ENCODE measurements at regions of chr14 and their contacts with region 1.

Region 1: GRCh38 chr14:77124345-77125280 is 17.0 kb downstream of the ZDHHC22 start:
- DNase-seq: peak; percentile 53
- H3K4me3 ChIP-seq: peak overlapping the region; percentile 4 to 42 (median 36)
- H3K27ac ChIP-seq: no peak overlapping the region
- H3K4me1 ChIP-seq: peaks cover 6% of the 10 kb centered on the region
- H3K27me3 ChIP-seq: peaks cover 12 to 16% of the 10 kb centered on the region in 2 experiments
- CTCF ChIP-seq: peak; percentile 43 to 81
- POLR2A ChIP-seq: no peak

Region 2: GRCh38 chr14:77097700-77098528 is 26.7 kb before region 1 on chr14 and contains the start of gene CIPC:
- CTCF ChIA-PET with region 1: interaction called, 19 read pairs
- POLR2A ChIA-PET with region 1: interaction called, 4 read pairs
- dilution Hi-C with region 1: no loop called
- intact Hi-C with region 1: loop called (anchors 1 kb)
- DNase-seq: peak; percentile 99
- H3K4me3 ChIP-seq: peak within 1 kb of the TSS; percentile 30 to 72 (median 66)
- H3K27ac ChIP-seq: peak within 1 kb of the TSS; percentile 57
- H3K4me1 ChIP-seq: peaks cover 27% of the 10 kb centered on the region
- H3K27me3 ChIP-seq: no peaks in the 10 kb centered on the region
- CTCF ChIP-seq: no peak
- POLR2A ChIP-seq: no peak
- total RNA-seq, gene CIPC: 17.4 and 17.7 TPM in 2 replicates

Region 3: DNA sequence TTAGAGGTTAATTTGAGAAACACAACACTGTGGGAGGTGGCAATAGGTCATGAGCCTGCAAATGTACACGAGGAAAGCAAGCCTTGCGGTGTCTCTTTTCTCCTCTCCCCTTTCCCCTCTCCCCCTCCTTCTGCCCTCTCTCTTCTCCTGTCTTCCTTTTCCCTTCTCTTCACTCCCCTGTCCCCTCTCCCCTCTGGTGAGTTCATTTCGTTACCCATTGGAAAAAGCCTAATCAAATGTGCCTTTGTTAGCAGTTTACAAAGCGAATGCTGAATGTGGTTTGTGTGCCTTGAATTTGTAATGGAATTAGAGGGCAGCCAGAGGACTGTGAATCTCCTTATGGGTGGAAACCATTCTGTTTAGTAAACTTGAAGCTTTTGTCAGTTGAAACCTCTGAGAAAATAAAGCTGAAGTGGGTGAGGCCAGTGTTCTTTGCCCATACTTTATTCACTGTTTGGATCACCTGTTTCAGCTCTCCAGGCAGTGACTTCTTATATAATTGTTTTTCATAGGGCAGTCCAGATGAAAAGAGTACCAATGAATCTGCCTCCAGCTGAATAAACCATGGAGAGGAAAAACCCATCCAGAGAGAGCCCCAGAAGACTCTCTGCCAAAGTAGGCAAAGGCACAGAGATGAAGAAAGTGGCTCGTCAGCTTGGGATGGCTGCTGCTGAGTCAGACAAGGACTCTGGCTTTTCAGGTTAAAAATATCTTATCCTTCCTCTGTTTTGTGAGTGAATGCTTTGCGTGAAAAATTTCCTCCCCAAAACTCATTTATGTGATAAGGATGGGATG is 19.3 kb before region 1 on chr14:
- CTCF ChIA-PET with region 1: interaction called, 19 read pairs
- POLR2A ChIA-PET with region 1: no interaction called
- dilution Hi-C with region 1: no loop called
- intact Hi-C with region 1: no loop called
- DNase-seq: no peak
- H3K4me3 ChIP-seq: no peak overlapping the region
- H3K27ac ChIP-seq: no peak overlapping the region
- H3K4me1 ChIP-seq: peaks cover 7% of the 10 kb centered on the region
- H3K27me3 ChIP-seq: no peaks in the 10 kb centered on the region
- CTCF ChIP-seq: no peak
- POLR2A ChIP-seq: no peak

Region 4: DNA sequence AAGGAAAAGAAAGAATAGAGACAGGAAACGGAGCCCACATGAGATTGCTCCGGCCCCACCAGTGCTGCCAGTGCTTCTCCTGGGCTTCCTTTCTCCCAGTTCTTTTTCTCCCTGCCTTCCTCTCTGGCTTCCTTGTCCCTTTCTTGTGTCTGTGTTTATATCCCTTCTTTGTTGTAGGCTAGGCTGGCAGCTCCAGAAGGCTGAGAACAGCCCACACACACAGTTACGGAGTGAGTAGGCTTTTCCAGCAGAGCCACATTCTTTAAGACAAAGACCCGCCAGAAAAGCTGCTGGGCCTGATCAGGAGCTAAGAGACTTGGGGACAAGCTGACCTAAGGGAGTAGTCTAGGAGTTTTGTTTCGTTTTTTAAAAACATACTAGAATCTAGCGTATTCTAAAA is 13.6 kb before region 1 on chr14:
- CTCF ChIA-PET with region 1: interaction called, 13 read pairs
- POLR2A ChIA-PET with region 1: no interaction called
- dilution Hi-C with region 1: no loop called
- intact Hi-C with region 1: no loop called
- DNase-seq: peak; percentile 68
- H3K4me3 ChIP-seq: no peak overlapping the region
- H3K27ac ChIP-seq: peak overlapping the region; percentile 67
- H3K4me1 ChIP-seq: peaks cover 14% of the 10 kb centered on the region
- H3K27me3 ChIP-seq: no peaks in the 10 kb centered on the region
- CTCF ChIP-seq: no peak
- POLR2A ChIP-seq: no peak

Region 5: GRCh38 chr14:77151918-77152588 is 27.4 kb after region 1 on chr14:
- CTCF ChIA-PET with region 1: interaction called, 11 read pairs
- POLR2A ChIA-PET with region 1: interaction called, 3 read pairs
- dilution Hi-C with region 1: no loop called
- intact Hi-C with region 1: no loop called
- DNase-seq: peak; percentile 28
- H3K4me3 ChIP-seq: no peak overlapping the region
- H3K27ac ChIP-seq: no peak overlapping the region
- H3K4me1 ChIP-seq: no peaks in the 10 kb centered on the region
- H3K27me3 ChIP-seq: peaks cover 11 to 19% of the 10 kb centered on the region in 2 experiments
- CTCF ChIP-seq: no peak
- POLR2A ChIP-seq: no peak

Region 6: DNA sequence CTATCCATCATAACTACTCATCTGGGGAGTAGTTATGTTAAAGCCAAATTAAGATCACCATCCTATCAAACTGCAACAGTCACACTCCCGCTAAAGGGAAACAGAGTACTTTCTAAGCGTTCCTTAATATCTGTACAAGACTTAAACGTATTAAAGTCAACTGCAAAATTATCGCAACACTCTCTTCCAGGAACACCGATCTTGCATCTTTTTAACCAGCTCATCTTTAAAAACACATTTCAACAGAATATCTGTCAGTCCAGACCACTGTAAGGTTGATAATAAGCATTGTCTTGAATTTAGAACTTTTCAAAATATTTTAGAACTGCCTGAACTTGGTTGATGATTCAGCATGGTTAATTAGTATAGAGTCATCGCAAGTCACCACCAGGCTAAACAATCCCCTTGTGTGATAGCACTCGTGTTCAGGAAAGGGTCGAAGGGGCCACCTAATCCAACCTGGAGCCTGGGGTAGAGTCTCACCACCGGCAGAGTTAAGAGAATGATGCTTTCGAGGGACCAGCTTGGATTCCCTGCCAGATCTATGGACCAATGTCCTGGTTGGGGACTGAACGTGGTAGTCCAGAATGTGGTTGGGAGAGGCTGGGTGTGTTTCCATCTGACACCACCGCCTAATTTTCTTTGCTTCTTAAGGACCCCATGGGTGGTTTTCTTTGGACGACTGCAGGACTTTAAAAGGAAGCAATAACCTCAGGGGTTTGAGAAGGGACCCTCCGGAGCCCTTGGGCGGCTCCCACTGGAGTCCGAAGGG is 490.9 kb after region 1 on chr14:
- CTCF ChIA-PET with region 1: no interaction called
- POLR2A ChIA-PET with region 1: no interaction called
- dilution Hi-C with region 1: no loop called
- intact Hi-C with region 1: no loop called
- DNase-seq: peak; percentile 63
- H3K4me3 ChIP-seq: peak overlapping the region; percentile 86 to 94 (median 90)
- H3K27ac ChIP-seq: peak overlapping the region; percentile 14
- H3K4me1 ChIP-seq: peaks cover 25% of the 10 kb centered on the region
- H3K27me3 ChIP-seq: peaks cover 0 to 4% of the 10 kb centered on the region in 2 experiments
- CTCF ChIP-seq: no peak
- POLR2A ChIP-seq: no peak

Measured in endothelial cell of umbilical vein (primary cell).